ENCODE measurements at regions of chr3 and their contacts with region 1.

Region 1: GRCh38 chr3:137946345-137946973 is 63.5 kb upstream of the CLDN18 start:
- DNase-seq: peak in 1 of 2 donors; percentile 72
- ATAC-seq: peak in 2 of 3 donors; percentile 52 to 55
- H3K4me3 ChIP-seq: no peak overlapping the region
- H3K4me3 Mint-ChIP-seq: no peak overlapping the region
- H3K27ac ChIP-seq: no peak overlapping the region
- H3K27ac Mint-ChIP-seq: no peak overlapping the region
- H3K4me1 ChIP-seq: no peaks in the 10 kb centered on the region
- H3K4me1 Mint-ChIP-seq: no peaks in the 10 kb centered on the region
- H3K27me3 ChIP-seq: no peaks in the 10 kb centered on the region
- H3K27me3 Mint-ChIP-seq: peaks cover 0 to 2% of the 10 kb centered on the region in 2 donors
- CTCF ChIP-seq: peak; percentile 68

Region 2: GRCh38 chr3:137105277-137105977 is 841.0 kb before region 1 on chr3:
- intact Hi-C with region 1: loop called (anchors 10 kb)
- DNase-seq: peak in 1 of 2 donors; percentile 65
- ATAC-seq: peak in 1 of 3 donors; percentile 58
- H3K4me3 ChIP-seq: no peak overlapping the region
- H3K4me3 Mint-ChIP-seq: no peak overlapping the region
- H3K27ac ChIP-seq: no peak overlapping the region
- H3K27ac Mint-ChIP-seq: no peak overlapping the region
- H3K4me1 ChIP-seq: no peaks in the 10 kb centered on the region
- H3K4me1 Mint-ChIP-seq: no peaks in the 10 kb centered on the region
- H3K27me3 ChIP-seq: no peaks in the 10 kb centered on the region
- H3K27me3 Mint-ChIP-seq: peaks cover 16 to 20% of the 10 kb centered on the region in 2 donors
- CTCF ChIP-seq: peak; percentile 53

Region 3: DNA sequence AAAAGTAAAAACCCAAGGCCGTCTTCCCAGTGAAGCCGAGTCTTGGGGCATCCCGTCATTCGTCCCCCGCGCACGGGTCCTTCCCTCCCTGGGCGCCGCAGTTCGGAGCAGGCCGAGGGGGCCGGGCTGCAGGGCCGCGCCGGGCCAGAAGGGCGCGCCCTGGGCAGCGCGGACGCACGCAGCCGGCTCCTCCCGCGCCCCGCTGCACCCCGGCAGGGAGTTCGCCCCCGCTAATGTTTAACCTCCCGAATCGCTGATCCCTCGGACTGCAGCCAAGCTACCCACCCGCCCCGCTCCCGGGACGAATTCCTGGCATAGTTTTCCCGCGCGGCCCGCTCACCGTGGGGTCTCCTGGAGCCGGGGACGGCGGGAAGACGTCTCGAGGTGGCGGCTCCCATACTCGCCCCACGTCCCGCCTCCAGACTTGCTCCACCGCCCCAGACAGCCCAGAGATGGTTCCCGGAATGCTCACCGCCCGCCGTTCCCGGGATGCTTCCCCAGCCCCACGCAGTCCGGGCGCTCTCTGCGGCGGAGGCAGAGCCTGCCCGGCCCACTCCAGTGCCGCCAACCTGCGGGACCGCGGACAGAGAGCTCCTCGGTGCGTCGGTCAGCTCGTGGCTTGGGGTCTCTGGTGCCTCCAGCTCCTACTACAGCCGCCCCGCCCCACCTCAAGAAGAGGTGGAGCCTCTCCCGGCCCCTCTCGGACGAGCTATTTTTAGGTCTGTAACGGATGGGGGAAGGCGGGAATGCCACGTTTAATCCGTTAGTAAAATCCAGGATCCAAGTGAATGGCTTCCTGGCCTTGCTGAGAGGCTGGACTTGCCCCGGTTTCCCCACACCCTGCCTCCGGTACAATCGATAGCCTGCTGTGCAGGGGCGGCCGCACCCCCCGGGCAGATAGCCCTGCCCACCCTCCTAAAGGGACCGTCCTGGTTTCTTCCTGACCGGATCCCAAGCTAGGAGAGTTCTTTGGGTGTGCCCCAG is 168.8 kb after region 1 on chr3 and contains the start of gene DZIP1L:
- intact Hi-C with region 1: no loop called
- DNase-seq: peak in 1 of 2 donors; percentile 39
- ATAC-seq: peak; percentile 57 to 90 (median 78)
- H3K4me3 ChIP-seq: peak within 1 kb of the TSS; percentile 44
- H3K4me3 Mint-ChIP-seq: peak within 1 kb of the TSS; percentile 80
- H3K27ac ChIP-seq: no peak within 1 kb of the TSS
- H3K27ac Mint-ChIP-seq: no peak within 1 kb of the TSS
- H3K4me1 ChIP-seq: peaks cover 13% of the 10 kb centered on the region
- H3K4me1 Mint-ChIP-seq: peaks cover 0 to 10% of the 10 kb centered on the region in 2 donors
- H3K27me3 ChIP-seq: peaks cover 10% of the 10 kb centered on the region
- H3K27me3 Mint-ChIP-seq: peaks cover 37 to 39% of the 10 kb centered on the region in 2 donors
- CTCF ChIP-seq: no peak
- total RNA-seq, gene DZIP1L: not detected

Measured in natural killer cell (primary cell).